ENCODE measurements at regions of chr10 and their contacts with region 1.

Region 1: DNA sequence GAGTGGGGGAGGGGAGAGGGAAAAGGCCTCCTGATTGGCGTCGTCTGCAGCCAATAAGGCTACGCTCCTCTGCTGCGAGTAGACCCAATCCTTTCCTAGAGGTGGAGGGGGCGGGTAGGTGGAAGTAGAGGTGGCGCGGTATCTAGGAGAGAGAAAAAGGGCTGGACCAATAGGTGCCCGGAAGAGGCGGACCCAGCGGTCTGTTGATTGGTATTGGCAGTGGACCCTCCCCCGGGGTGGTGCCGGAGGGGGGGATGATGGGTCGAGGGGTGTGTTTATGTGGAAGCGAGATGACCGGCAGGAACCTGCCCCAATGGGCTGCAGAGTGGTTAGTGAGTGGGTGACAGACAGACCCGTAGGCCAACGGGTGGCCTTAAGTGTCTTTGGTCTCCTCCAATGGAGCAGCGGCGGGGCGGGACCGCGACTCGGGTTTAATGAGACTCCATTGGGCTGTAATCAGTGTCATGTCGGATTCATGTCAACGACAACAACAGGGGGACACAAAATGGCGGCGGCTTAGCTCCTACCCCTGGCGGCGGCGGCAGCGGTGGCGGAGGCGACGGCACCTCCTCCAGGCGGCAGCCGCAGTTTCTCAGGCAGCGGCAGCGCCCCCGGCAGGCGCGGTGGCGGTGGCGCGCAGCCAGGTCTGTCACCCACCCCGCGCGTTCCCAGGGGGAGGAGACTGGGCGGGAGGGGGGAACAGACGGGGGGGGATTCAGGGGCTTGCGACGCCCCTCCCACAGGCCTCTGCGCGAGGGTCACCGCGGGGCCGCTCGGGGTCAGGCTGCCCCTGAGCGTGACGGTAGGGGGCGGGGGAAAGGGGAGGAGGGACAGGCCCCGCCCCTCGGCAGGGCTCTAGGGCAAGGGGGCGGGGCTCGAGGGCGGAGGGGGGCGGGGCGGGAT is at the start of gene KAT6B:
- DNase-seq: peak; percentile 100
- H3K4me3 ChIP-seq: peak within 1 kb of the TSS; percentile 28 to 96 (median 35)
- H3K27ac ChIP-seq: peak within 1 kb of the TSS; percentile 57
- H3K4me1 ChIP-seq: no peaks in the 10 kb centered on the region
- H3K27me3 ChIP-seq: no peaks in the 10 kb centered on the region
- CTCF ChIP-seq: peak; percentile 9 to 22
- POLR2A ChIP-seq: peak; percentile 57
- total RNA-seq, gene KAT6B: 15.0 and 17.0 TPM in 2 replicates

Region 2: GRCh38 chr10:74262856-74263255 is 563.5 kb before region 1 on chr10:
- CTCF ChIA-PET with region 1: no interaction called
- POLR2A ChIA-PET with region 1: no interaction called
- dilution Hi-C with region 1: no loop called
- intact Hi-C with region 1: loop called (anchors 1 kb)
- DNase-seq: no peak
- H3K4me3 ChIP-seq: no peak overlapping the region
- H3K27ac ChIP-seq: no peak overlapping the region
- H3K4me1 ChIP-seq: peaks cover 2% of the 10 kb centered on the region
- H3K27me3 ChIP-seq: no peaks in the 10 kb centered on the region
- CTCF ChIP-seq: no peak
- POLR2A ChIP-seq: no peak

Region 3: DNA sequence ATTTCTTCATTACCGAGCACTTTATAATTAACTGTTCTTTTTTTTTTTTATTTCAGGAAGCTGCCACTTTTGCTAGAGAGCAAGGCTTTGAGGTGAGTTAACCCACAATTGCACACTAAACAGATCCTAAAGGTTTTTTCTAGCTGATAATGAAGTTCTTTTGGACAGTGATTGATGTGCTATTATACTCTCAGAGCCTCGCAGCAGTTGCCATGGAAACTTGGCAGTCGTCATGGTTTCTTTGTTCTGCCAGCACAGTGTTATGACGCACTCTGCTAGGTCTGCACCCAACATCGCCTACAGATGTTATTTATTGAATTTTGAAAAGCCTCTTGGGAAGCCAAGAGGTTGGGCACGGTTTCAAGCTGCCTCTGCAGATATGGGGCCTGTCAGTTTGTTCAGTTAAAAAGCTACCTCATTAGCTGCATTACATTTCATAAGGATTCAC is 237.1 kb before region 1 on chr10:
- CTCF ChIA-PET with region 1: no interaction called
- POLR2A ChIA-PET with region 1: no interaction called
- dilution Hi-C with region 1: no loop called
- intact Hi-C with region 1: loop called (anchors 1 kb)
- DNase-seq: peak; percentile 99
- H3K4me3 ChIP-seq: no peak overlapping the region
- H3K27ac ChIP-seq: peak overlapping the region; percentile 71
- H3K4me1 ChIP-seq: peaks cover 16% of the 10 kb centered on the region
- H3K27me3 ChIP-seq: no peaks in the 10 kb centered on the region
- CTCF ChIP-seq: no peak
- POLR2A ChIP-seq: no peak

Region 4: GRCh38 chr10:74842301-74842954 is 16.0 kb after region 1 on chr10:
- CTCF ChIA-PET with region 1: interaction called, 5 read pairs
- POLR2A ChIA-PET with region 1: interaction called, 13 read pairs
- dilution Hi-C with region 1: no loop called
- intact Hi-C with region 1: no loop called
- DNase-seq: no peak
- H3K4me3 ChIP-seq: no peak overlapping the region
- H3K27ac ChIP-seq: no peak overlapping the region
- H3K4me1 ChIP-seq: no peaks in the 10 kb centered on the region
- H3K27me3 ChIP-seq: no peaks in the 10 kb centered on the region
- CTCF ChIP-seq: no peak
- POLR2A ChIP-seq: no peak

Region 5: GRCh38 chr10:75229971-75230370 is 403.6 kb after region 1 on chr10:
- CTCF ChIA-PET with region 1: no interaction called
- POLR2A ChIA-PET with region 1: no interaction called
- dilution Hi-C with region 1: no loop called
- intact Hi-C with region 1: loop called (anchors 5 kb)
- DNase-seq: peak; percentile 50
- H3K4me3 ChIP-seq: no peak overlapping the region
- H3K27ac ChIP-seq: peak overlapping the region; percentile 38
- H3K4me1 ChIP-seq: peaks cover 46% of the 10 kb centered on the region
- H3K27me3 ChIP-seq: no peaks in the 10 kb centered on the region
- CTCF ChIP-seq: no peak
- POLR2A ChIP-seq: no peak

Measured in endothelial cell of umbilical vein (primary cell).